ENCODE measurements at regions of chr17 and their contacts with region 1.

Region 1: GRCh38 chr17:55458977-55459376 is 37.3 kb upstream of the MMD start:
- DNase-seq: peak; percentile 81
- H3K4me3 Mint-ChIP-seq: no peak overlapping the region
- H3K27ac Mint-ChIP-seq: no peak overlapping the region
- H3K4me1 Mint-ChIP-seq: peaks cover 19% of the 10 kb centered on the region
- H3K27me3 Mint-ChIP-seq: peaks cover 17% of the 10 kb centered on the region

Region 2: GRCh38 chr17:55437159-55437605 is 21.8 kb before region 1 on chr17:
- CTCF ChIA-PET with region 1: interaction called, 3 read pairs
- POLR2A ChIA-PET with region 1: no interaction called
- intact Hi-C with region 1: loop called (anchors 1 kb)
- DNase-seq: no peak
- H3K4me3 Mint-ChIP-seq: no peak overlapping the region
- H3K27ac Mint-ChIP-seq: no peak overlapping the region
- H3K4me1 Mint-ChIP-seq: peaks cover 44% of the 10 kb centered on the region
- H3K27me3 Mint-ChIP-seq: peaks cover 24% of the 10 kb centered on the region

Region 3: DNA sequence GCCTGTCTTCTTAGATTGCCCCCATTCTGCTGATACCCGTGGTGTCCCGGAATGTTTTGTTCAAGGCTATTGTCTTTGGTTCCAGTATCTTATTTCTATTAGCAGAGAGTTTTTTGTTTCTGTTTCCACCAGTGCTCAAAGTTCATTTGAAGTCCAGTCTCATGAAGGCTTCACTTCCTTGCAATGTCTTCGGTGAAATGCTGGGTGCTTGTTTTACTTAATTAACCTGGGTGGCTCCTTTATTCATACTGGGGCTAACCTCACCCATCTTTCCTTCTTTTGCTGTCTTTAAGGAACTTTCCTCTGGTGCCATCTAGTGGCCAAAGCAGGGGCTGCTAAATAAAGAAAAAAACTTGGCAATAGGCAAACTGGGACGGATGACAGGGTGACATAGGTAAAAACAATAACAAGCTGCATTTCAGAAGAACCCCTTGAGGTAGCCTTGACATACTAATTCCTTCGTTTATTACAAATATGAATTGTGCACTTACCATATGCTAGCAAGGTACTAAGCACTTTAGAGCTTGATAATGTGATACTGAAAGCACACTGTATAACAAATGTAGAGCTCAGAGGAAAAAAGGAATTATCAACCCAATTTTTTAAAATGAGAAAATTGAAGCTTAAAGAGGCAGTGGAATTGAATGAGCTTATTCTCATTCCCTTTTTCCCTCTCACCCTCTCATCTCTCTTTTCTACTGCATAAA is 55.1 kb after region 1 on chr17:
- CTCF ChIA-PET with region 1: no interaction called
- POLR2A ChIA-PET with region 1: no interaction called
- intact Hi-C with region 1: no loop called
- DNase-seq: peak; percentile 75
- H3K4me3 Mint-ChIP-seq: no peak overlapping the region
- H3K27ac Mint-ChIP-seq: no peak overlapping the region
- H3K4me1 Mint-ChIP-seq: no peaks in the 10 kb centered on the region
- H3K27me3 Mint-ChIP-seq: peaks cover 6% of the 10 kb centered on the region

Measured in activated CD4-positive, alpha-beta memory T cell treated with anti-CD3 and anti-CD28 coated beads for 36 hours (primary cell).